AG04449 (cell line): ENCODE measurements at regions of chr7 and their contacts with region 1.

Region 1: DNA sequence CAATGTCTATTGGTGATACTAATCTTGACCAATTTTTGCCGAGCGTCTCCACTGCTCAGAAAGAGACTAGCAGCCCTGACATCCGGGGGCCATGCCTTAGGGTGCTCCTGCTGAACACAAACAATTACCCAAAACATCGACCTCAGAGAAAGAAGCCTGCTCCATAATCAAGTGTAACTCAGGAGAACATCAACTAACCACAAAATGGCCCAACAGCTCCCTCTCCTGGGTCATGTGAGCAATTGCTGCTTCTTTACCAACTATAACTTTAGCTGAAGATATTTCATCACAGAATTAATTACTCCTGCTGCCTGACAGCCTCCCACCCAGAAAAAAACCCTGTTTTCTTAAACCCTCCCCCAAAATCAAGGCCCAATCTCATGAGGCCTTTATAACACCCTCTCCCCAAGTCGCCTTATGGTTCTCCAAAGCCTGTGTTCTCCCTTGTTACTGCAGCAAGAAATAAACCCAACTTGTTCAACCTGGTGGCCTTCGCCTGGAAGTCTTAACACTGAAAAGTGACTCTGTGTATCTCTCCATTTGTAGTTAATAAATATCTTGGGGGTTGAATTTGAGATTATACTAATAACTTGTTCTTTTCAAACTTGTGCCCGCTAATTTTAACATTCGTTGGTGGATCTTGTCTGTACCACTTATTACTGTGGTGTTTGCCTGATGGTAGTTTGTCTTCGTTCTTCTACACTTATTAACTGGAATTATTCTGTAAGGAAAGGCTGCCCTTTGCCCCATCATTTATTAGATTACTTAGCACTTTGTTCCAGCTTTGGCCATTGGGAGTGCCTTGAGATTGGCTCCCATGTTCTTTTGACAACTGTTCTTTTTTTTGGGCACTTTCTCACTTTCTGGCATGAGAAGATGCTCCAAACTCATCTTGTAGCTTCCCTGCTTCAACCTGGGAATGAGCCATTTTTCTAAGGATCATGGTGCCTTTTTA is 21.2 kb upstream of the RAMP3 start:
- DNase-seq: no peak
- H3K4me3 ChIP-seq: no peak overlapping the region
- CTCF ChIP-seq: peak; percentile 71

Region 2: GRCh38 chr7:44847508-44847920 is 288.9 kb before region 1 on chr7:
- CTCF ChIA-PET with region 1: interaction called, 24 read pairs
- POLR2A ChIA-PET with region 1: no interaction called
- DNase-seq: no peak
- H3K4me3 ChIP-seq: peak overlapping the region; percentile 74
- CTCF ChIP-seq: peak; percentile 95

Region 3: DNA sequence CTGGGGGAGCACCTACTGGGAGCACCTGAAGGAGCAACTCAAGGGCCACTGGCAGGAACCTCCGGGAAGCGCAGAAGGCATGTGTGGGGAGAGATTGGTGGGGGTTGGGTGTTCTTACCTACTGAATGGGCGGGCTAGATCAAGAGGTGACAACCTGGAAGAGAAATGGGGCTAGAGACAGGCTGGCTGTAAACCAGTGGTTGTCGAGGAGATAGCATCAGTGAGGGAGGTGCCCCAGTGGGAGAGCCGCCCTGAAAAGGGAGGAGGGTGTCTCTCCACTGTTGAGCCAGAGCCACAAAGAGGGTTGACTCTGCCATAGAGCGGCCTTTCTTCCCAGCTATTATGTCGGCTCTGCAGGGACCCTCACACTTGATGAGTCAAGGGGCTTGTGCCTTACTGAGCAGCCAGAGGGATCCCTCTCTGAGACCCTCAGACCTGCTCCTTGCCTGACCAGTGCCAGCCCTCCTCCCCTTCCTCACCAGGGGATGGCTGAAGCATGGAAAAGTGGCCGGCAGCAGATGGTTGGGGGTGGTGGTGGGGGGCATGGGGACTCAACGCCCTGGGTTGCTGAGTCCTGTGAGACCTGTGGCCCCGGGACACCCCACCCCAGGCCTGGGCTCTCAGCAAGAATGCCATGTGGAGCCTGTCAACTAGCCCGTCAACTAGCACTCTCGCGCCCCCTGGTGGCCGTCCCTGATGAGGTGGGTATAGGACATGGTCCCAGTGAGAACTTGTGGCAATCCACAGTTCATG is 214.6 kb before region 1 on chr7:
- CTCF ChIA-PET with region 1: interaction called, 25 read pairs
- POLR2A ChIA-PET with region 1: no interaction called
- DNase-seq: no peak
- H3K4me3 ChIP-seq: no peak overlapping the region
- CTCF ChIP-seq: peak; percentile 92

Region 4: DNA sequence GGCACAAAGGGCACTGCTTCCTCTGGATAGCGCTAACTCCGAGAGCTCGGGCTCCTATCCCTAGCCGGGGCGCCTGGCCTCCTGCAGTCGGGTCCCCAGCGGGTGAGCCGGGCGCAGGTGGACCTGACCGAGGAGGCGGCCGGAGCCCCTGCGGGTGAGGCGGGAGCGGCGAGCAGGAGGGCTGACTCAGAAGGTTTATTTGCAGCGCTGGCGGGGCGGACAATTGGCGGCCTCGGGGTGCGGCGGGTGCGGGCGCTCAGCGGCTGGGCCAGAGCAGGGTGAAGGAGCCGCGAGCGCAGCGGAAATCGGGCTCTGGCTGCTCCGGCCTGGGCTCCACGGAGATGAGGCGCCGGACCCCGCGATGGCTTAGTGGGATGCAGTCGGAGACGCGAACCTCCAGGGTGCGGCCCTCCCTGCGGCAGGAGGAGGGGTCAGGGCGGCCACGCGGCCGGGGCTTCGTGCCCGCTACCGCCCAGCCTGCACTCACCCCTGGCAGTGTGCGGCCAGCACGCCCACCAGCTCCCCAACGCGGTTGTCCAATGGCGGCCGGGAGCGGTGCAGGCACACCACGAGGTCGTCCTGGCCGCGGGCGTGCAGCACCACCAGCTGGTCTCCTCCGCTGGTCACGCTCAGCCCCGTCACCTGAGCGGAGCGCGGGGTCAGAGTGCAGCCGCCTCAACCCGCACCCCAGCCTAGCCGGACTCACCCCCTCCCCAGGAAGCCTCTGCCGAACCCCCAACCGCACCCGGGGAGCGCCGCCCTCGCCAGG is 173.7 kb before region 1 on chr7:
- CTCF ChIA-PET with region 1: interaction called, 21 read pairs
- POLR2A ChIA-PET with region 1: no interaction called
- DNase-seq: no peak
- H3K4me3 ChIP-seq: peak overlapping the region; percentile 48
- CTCF ChIP-seq: peak; percentile 15

Region 5: GRCh38 chr7:44973610-44974401 is 162.6 kb before region 1 on chr7:
- CTCF ChIA-PET with region 1: interaction called, 80 read pairs
- POLR2A ChIA-PET with region 1: no interaction called
- DNase-seq: no peak
- H3K4me3 ChIP-seq: no peak overlapping the region
- CTCF ChIP-seq: peak; percentile 39

Region 6: DNA sequence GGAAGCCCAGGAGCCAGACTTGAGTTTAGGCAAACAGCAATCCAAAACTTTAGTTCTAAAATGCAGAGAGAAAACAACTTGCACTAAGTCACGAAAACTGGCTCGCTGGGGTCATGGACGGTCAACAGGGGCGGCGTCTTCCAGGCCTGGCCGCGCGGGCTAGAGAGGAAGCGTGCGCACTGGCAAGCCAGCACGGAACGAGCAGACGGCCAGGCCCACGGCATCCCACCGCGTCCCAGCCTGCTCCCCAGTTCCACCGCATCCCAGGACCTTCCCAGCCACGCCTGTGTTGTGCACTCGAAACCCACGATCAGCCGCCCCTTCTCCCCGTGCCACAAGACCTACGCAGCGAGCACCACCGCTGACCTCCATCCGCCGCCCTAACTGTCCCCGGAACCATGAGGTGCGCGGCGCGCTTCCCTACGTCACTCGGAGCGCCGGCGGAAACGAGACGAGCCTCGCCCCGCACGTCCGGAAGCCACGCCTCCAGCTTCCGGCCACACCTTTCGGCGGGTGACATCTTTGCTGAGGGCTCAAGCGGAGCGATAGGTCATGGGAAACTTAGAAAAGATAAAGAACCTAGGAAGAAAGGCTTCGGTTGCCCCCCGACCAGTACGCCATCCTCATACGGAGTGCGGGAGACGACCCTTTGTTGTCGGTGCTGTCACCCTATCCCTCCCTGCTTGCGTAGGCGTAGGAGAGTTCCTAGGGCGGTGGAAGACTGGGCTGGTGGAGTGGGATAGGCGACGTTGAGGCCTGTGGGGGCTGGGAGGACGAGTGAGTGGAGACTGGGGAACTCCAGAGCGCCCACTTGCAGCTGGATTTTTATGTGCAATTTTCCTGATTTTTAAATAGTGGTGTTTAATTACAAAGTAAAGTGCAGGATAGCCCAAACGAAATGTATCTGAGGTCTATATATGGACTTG is 24.8 kb before region 1 on chr7 and contains the start of gene TBRG4:
- CTCF ChIA-PET with region 1: interaction called, 16 read pairs
- POLR2A ChIA-PET with region 1: no interaction called
- DNase-seq: peak; percentile 45
- H3K4me3 ChIP-seq: peak within 1 kb of the TSS; percentile 100
- CTCF ChIP-seq: peak; percentile 28

Region 7: GRCh38 chr7:45122975-45123860 is 13.2 kb before region 1 on chr7:
- CTCF ChIA-PET with region 1: interaction called, 25 read pairs
- POLR2A ChIA-PET with region 1: no interaction called
- DNase-seq: no peak
- H3K4me3 ChIP-seq: no peak overlapping the region
- CTCF ChIP-seq: no peak

Region 8: DNA sequence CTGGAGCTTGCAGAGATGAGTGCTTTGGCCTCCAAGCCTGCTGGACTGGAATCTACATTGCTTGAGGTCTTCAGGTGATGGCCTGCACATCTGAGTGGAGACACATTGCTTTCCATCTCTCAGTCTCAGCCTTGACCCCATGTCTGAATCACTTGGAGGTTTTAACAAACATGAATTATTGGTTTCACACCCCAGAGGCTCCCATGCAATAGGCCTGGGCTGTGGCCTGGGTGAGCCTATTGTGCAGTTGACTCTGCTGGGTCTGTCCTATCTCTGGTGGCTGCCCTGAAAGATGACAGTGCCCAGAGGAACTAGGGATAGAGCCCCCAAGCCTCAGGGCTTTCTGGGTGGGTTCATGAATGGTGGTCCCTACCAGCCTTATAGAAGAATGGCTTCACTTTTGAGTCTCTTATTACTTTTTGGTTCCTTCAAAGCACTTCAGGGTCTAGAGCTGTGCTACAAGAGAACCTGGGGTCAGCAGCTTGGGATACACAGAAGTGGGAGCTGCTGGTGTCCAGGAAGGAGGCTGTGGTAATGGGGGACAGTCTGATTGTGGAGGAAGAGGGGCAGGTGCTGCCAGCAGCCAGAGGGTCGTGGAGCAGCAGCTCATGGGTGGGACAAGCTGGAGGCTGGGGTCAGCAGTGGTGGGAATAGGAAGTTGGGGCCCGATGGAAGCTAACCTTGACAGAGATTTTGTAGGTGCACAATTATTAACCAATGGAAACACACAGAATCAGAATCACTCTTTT is 26.7 kb after region 1 on chr7:
- CTCF ChIA-PET with region 1: no interaction called
- POLR2A ChIA-PET with region 1: no interaction called
- DNase-seq: no peak
- H3K4me3 ChIP-seq: no peak overlapping the region
- CTCF ChIP-seq: no peak